ENCODE measurements at regions of chr16 and their contacts with region 1.

Region 1: DNA sequence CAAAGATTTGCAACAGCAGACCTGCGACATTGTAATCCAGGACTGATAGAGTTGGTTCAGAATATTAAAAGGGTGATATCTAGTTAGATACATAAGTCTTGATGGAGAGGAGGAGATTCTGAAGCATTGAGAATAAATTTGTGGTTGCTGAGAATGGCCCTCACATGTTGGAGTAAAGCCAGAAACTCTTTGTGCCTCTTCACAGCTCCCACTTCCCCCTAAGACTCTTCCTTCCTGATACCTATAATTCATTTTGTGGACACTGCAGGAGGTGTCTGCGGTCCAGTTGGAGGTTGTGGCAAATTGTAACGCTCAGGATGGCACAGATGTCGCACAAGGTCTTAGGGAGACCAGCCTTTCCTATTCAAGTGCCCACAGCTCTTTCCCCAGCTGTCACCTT is 17.5 kb downstream of the WWOX start:
- DNase-seq: no peak
- ATAC-seq: no peak
- H3K4me3 ChIP-seq: no peak overlapping the region
- H3K27ac ChIP-seq: no peak overlapping the region
- H3K4me1 ChIP-seq: no peaks in the 10 kb centered on the region
- H3K27me3 ChIP-seq: no peaks in the 10 kb centered on the region
- CTCF ChIP-seq: no peak

Region 2: DNA sequence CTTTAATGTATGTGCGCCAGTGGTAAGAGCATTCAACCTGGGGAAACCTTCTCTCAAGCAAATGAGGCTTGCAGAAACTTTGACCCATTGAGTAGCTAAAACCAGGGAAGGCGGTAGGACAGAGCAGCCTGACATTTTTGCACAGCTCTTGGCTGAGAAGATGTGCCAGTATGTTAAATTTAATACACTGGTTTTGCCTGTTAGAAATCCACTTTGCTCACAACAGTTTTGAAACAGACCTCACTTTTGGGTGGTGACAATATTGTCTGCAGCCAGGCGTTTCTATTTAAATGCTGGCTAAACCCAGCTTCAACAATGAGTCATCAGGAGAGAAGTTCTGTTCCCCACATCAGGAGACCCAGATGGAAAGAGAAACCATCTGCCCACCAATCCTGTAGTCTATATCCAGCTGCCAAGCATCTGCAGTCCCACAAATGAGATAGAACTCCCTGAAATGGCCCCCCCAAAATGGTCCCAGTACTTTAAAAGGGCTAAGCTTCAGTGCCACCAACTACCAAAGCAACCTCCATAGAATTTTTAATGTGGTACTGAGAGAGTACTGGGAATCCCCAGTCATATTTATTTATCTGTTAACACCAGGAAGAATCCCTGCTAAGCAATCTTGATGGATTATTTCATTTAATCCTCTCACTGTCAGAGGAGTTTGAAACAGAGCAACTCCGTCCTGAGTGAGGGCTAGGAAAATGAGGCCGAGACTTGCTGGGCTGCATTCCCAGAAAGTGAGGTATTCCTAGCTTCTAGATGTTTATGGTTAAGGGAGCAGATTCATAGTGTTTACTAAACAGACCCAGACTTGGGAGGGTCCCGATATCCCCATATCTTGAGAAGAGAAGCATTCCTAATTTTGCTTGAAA is 123.6 kb before region 1 on chr16:
- intact Hi-C with region 1: no loop called
- DNase-seq: no peak
- ATAC-seq: peak in 7 of 8 donors; percentile 34 to 83 (median 67)
- H3K4me3 ChIP-seq: no peak overlapping the region
- H3K27ac ChIP-seq: peak overlapping the region in 7 of 10 donors; percentile 11 to 69 (median 54)
- H3K4me1 ChIP-seq: peaks cover 0 to 7% (median 0%) of the 10 kb centered on the region in 9 donors
- H3K27me3 ChIP-seq: no peaks in the 10 kb centered on the region
- CTCF ChIP-seq: no peak

Region 3: DNA sequence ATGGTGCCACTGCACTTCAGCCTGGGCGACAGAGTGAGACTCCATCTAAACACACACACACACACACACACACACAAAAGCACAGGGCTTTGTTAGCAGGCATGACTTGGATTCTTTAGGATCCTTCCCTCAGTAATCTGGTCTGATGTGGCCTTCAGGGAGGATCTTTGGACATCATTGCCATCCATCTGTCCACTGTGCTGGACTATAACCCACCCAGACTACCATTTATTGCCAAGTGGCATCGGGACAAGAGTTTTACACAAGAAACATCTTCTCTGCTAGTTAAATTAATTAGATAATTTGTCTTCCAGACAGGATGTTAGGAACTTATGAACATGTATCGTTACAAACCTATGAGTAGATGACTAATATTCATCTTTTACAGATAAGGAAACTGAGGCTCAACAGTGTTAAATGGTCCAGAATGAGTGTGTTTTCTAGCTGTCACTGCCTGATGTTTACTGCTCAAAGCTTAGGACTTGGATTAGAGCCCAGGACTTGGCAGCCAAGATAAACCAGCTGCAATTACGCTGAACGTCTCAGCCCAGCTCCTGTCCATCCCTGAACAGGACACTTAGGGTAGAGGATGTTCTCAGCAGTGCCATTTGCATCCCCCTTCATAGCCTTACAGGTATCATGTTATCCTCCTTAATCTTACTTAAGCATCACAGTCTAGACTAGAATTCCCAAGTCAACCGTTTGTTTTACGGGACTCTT is 268.3 kb after region 1 on chr16:
- intact Hi-C with region 1: loop called in 1 of 10 experiments (anchors 5 kb)
- DNase-seq: no peak
- ATAC-seq: peak in 1 of 8 donors; percentile 27
- H3K4me3 ChIP-seq: no peak overlapping the region
- H3K27ac ChIP-seq: no peak overlapping the region
- H3K4me1 ChIP-seq: peaks cover 0 to 23% (median 10%) of the 10 kb centered on the region in 9 donors
- H3K27me3 ChIP-seq: no peaks in the 10 kb centered on the region
- CTCF ChIP-seq: no peak

Region 4: GRCh38 chr16:78478267-78478861 is 361.4 kb after region 1 on chr16:
- intact Hi-C with region 1: loop called in 1 of 10 experiments (anchors 10 kb)
- DNase-seq: no peak
- ATAC-seq: no peak
- H3K4me3 ChIP-seq: no peak overlapping the region
- H3K27ac ChIP-seq: no peak overlapping the region
- H3K4me1 ChIP-seq: no peaks in the 10 kb centered on the region
- H3K27me3 ChIP-seq: no peaks in the 10 kb centered on the region
- CTCF ChIP-seq: peak in 5 of 9 donors; percentile 30 to 65 (median 55)